ENCODE measurements at regions of chr15 and their contacts with region 1.

Region 1: GRCh38 chr15:52019388-52020220 is 585 bp downstream of the MAPK6 start:
- DNase-seq: peak; percentile 71
- H3K4me3 ChIP-seq: peak overlapping the region; percentile 85
- H3K27ac ChIP-seq: peak overlapping the region; percentile 91
- H3K4me1 ChIP-seq: peaks cover 13% of the 10 kb centered on the region
- H3K27me3 ChIP-seq: no peaks in the 10 kb centered on the region
- CTCF ChIP-seq: no peak

Region 2: GRCh38 chr15:51484781-51485180 is 534.8 kb before region 1 on chr15:
- CTCF ChIA-PET with region 1: no interaction called
- POLR2A ChIA-PET with region 1: no interaction called
- intact Hi-C with region 1: no loop called
- DNase-seq: no peak
- H3K4me3 ChIP-seq: no peak overlapping the region
- H3K27ac ChIP-seq: no peak overlapping the region
- H3K4me1 ChIP-seq: no peaks in the 10 kb centered on the region
- H3K27me3 ChIP-seq: no peaks in the 10 kb centered on the region
- CTCF ChIP-seq: no peak

Region 3: GRCh38 chr15:52071546-52071945 is 51.9 kb after region 1 on chr15:
- CTCF ChIA-PET with region 1: no interaction called
- POLR2A ChIA-PET with region 1: no interaction called
- intact Hi-C with region 1: loop called (anchors 5 kb)
- DNase-seq: no peak
- H3K4me3 ChIP-seq: no peak overlapping the region
- H3K27ac ChIP-seq: no peak overlapping the region
- H3K4me1 ChIP-seq: no peaks in the 10 kb centered on the region
- H3K27me3 ChIP-seq: no peaks in the 10 kb centered on the region
- CTCF ChIP-seq: no peak

Measured in A673 (cell line).